Heart left ventricle (tissue), 16 donors: ENCODE measurements at regions of chr14 and their contacts with region 1.

Region 1: DNA sequence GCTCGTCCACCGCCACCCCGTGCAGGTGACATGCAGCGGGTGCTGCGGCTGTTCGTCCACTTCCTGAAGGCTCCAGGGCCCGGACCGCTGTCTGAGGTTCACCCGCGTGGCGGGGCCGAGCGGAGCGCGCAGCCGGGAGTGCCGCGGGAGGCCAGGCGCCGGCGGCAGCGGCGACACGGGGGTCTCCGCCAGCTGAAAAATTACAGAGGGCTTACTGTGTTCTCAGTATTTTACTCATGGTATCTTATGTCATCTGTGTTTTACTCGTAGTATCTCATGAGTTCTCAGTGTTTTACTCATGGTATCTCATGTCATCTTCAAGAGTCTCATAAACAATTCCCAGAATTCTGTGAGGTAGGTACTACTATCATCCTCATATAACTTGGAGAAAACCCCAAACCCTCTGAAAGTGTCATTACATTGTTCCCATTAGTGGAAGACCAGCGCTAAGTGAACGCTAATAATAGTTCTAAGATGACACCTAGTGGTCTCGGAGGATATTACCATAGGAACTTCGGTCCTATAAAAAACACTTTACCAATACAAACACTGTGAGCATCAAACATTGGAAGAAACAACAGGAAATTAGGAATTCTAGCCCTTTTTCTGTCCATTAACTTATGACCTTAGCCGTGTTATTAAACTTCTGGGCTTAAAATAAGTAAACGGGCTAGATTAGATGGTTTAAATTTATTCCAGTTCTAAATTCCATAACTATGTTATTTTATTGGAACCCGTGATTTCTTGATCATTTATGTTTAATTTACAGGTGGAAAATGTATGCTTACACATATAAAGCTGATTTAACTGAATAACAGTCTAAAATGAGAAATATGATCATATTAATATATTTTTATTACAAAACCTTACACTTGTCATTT is 32.4 kb downstream of the AK7 start:
- DNase-seq: peak in 3 of 5 donors; percentile 13 to 68 (median 35)
- ATAC-seq: peak; percentile 51 to 93 (median 79)
- H3K4me3 ChIP-seq: peak overlapping the region; percentile 6 to 56 (median 44)
- H3K27ac ChIP-seq: no peak overlapping the region
- H3K4me1 ChIP-seq: peaks cover 0 to 14% (median 2%) of the 10 kb centered on the region in 12 donors
- H3K27me3 ChIP-seq: no peaks in the 10 kb centered on the region
- CTCF ChIP-seq: peak; percentile 68 to 85 (median 79)
- POLR2A ChIP-seq: no peak

Region 2: GRCh38 chr14:96001866-96002497 is 422.4 kb before region 1 on chr14:
- intact Hi-C with region 1: loop called in 1 of 10 experiments (anchors 5 kb)
- DNase-seq: no peak
- ATAC-seq: no peak
- H3K4me3 ChIP-seq: no peak overlapping the region
- H3K27ac ChIP-seq: no peak overlapping the region
- H3K4me1 ChIP-seq: no peaks in the 10 kb centered on the region
- H3K27me3 ChIP-seq: peaks cover 0 to 50% (median 22%) of the 10 kb centered on the region in 9 donors
- CTCF ChIP-seq: no peak
- POLR2A ChIP-seq: no peak

Region 3: GRCh38 chr14:96297000-96297399 is 127.3 kb before region 1 on chr14:
- intact Hi-C with region 1: loop called (anchors 2 to 5 kb)
- DNase-seq: no peak
- ATAC-seq: no peak
- H3K4me3 ChIP-seq: no peak overlapping the region
- H3K27ac ChIP-seq: no peak overlapping the region
- H3K4me1 ChIP-seq: no peaks in the 10 kb centered on the region
- H3K27me3 ChIP-seq: no peaks in the 10 kb centered on the region
- CTCF ChIP-seq: peak; percentile 28 to 64 (median 50)
- POLR2A ChIP-seq: no peak

Region 4: DNA sequence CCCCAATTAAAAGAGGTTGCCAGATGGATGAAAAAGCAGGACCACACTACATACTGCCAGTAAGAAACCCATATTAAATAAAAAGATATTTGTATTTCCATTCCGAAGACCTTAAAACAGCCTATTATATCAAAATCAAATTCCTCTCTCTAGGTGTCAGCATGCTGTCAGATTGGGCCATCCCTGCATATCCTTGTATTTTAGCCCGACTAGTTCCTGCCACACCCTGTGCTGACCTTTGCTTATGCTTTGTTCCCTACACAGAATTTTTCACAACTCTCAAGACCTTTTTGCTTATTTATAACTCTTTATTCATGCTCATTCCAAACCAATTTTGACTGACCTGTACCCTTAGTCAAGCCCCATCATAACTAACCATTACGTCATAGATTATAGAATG is 48.3 kb before region 1 on chr14:
- intact Hi-C with region 1: no loop called
- DNase-seq: no peak
- ATAC-seq: no peak
- H3K4me3 ChIP-seq: no peak overlapping the region
- H3K27ac ChIP-seq: no peak overlapping the region
- H3K4me1 ChIP-seq: no peaks in the 10 kb centered on the region
- H3K27me3 ChIP-seq: no peaks in the 10 kb centered on the region
- CTCF ChIP-seq: no peak
- POLR2A ChIP-seq: no peak

Region 5: DNA sequence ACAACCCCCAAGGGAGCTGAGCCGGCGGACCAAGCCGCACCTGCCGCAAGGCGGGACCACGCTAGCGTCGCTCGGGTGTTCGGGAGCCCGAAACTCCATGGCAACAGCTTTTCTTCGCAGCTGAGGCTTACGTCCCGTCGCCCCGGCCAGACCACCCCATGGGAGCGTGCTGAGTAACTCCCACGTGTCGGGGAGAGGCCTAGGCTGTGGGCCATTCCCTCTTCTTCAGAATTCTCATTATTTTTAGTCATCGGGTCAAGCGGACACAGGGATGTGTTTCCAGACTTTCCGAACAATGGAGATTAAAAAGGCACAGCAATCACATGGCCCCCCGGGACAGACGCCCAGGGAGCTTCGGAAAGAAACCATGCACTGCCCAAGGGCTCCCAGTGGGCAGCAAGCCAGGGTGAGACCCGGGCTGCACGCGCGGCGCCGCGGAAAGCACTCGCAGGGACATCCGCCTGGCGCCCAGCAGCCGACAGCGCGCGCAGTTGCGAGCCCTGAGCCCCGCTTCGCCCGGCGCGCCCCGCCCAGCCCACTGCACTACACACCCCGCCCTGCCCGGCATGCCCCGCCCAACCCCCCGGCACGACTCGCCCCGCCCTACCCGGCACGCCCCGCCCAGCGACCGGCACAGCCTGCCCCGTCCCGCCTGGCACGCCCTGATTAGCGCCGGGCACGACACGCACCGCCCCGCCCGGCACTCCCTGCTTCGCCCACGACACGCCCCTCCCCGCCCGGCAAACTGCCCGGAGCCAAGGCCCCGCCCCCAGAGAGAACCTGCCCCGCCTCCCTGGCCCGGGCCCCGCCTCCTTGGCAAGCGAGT is 32.8 kb before region 1 on chr14:
- intact Hi-C with region 1: loop called in 1 of 10 experiments (anchors 2 kb)
- DNase-seq: peak; percentile 95 to 100 (median 97)
- ATAC-seq: peak; percentile 96 to 99 (median 98)
- H3K4me3 ChIP-seq: peak overlapping the region; percentile 53 to 88 (median 80)
- H3K27ac ChIP-seq: peak overlapping the region in 11 of 12 donors; percentile 3 to 81 (median 66)
- H3K4me1 ChIP-seq: peaks cover 0 to 16% (median 9%) of the 10 kb centered on the region in 12 donors
- H3K27me3 ChIP-seq: peaks cover 0 to 13% (median 0%) of the 10 kb centered on the region in 9 donors
- CTCF ChIP-seq: no peak
- POLR2A ChIP-seq: no peak

Region 6: DNA sequence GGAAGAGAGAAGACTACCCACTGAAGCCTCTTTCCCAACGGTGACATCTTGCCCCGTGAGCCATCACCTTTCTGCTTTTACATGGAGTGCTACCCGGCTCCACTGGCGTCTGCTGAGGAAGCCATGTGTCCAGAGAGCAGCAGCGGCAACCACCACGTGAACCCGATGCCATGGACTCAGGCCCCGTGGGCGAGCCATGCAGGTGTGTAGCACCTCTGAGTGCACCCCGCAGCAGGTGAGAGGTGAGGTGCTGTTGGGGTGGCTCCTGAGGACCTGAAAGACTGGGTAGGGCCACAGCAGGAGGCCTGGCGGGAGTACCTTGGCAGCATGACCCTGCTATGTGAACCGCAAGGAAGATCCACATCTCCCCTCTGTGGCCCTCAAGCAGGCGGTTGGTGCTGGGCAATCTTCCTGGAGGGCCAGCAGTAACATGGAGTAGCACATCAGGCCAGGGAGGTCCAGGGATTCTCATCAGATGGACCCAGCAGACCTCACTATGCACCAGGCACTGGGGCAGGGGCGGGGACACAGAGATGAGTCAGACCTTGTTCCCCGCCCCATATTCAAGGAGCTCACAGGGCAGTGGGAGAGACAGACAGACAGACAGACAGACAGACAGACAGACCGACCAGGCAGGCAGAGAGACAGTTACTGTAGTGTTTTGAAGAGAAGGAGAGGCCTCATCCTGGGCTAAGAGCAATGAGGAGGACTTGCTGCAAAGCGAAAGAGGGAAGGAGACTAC is 207.4 kb after region 1 on chr14:
- intact Hi-C with region 1: no loop called
- DNase-seq: no peak
- ATAC-seq: no peak
- H3K4me3 ChIP-seq: no peak overlapping the region
- H3K27ac ChIP-seq: no peak overlapping the region
- H3K4me1 ChIP-seq: no peaks in the 10 kb centered on the region
- H3K27me3 ChIP-seq: peaks cover 0 to 6% (median 0%) of the 10 kb centered on the region in 9 donors
- CTCF ChIP-seq: no peak
- POLR2A ChIP-seq: no peak